ENCODE measurements at regions of chr11 and their contacts with region 1.

Region 1: DNA sequence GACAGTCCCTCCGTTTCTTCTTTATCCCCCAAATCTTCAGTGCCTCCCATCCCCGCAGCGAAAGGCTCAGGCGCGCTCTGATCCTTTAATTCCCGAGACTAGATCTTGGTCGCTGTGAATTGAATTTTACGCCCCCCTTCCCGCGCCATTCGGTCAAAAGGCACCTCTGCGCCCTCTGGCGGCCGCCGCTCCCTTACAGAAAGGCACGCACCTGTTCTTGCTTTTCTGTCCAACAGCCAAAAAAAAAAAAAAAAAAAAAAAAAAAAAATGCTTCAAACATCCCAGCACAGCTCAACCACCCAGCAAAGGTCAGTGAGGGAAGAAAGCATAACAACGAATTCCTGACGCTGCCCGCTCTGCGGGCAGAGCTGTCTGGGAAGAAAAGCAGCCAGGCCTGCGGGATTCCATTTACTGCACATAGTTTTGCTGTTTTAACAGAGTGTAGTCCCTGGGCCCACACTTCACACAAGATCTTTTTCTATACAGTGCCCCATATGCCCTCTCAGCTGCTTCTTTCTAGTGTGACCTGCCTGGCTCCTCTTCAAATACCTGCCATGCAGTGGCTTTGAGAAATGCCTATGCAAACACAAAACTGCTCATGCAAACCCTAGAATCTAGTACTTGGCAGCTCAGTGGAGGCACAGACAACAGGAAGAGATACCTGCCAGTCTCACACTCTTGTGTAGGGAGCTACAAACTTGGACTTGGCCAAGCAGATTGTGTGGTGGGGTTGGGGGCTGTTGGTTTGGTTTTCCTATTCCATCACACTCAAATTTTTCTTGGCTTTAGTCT is 1.3 kb upstream of the ESAM start:
- DNase-seq: peak; percentile 89

Region 2: DNA sequence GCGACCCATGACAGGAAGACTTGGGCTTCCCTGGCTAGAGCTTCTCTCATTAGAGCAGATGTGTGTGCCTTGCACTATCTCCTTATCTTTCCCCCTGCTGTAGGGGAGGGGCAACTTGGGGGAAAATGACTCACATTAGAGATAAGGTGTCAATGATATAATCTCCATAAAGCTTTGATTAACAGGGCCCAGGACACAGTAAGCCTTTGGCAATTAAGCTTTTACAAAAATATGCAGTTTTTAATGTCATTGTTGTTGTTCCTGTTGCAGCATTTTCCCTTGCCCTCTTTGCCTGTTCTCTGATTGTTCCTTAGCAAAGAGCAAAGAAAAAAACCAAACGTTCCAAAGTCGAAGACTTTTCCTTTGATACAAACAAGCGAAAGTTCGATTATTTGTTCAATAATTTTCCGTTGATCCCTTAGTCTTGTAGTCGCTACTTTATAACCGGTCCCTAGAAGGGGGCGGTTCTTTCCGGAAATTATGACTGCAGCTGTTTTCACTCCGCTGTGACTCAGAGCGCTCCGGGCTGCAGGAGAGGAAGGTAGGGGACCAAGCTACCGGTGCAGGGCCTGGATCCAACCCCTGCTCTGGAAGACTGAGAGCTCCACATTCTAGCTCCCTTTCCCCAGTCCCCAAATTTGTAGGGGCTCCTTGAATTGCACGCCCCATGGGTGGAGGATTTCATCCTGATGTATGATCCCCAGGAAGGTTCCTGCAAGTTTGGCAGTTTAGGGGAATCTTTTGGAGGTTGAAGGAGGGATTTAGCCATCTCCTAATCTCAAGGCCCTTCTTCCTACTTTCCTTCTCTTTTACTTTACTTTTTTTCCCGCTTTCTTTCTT is 648.2 kb before region 1 on chr11 and contains the start of gene VWA5A:
- intact Hi-C with region 1: no loop called
- DNase-seq: peak; percentile 87
- total RNA-seq, gene VWA5A: 4.3 TPM

Region 3: DNA sequence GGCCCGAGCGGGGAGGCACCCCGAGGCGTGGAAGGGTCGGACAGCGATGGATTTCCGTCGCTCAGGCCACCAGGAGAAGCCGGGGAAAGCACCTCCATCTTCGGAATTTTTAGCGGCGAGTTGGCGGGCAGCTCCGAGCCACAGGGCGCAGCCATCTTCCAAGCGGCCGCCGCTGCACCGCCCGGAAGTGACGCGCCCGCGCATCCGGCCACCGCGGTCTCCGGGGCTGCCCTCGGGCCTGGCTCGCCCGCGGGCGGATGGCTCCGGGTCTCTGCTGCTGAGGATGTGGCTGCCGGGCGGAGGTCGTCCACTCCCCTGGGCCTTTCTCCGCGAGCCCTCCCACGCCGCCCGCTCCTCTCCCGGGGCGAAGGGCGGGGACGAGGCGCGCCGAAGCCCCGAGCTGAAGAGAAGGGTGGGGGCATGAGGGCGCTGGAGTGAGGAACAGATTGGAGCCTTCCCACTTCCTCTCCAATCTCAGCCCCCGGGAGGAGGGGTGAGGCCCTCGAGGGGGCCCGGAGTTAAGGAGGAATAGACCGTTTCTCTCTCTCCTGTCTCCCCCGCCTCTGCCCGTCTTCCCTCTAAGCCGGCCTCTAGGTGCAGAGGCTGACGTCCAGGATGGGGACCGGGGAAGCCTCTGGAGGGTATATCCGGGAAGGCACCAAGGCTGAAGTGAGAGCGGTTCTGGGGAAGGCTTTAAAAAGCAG is 37.0 kb after region 1 on chr11 and contains the start of gene MSANTD2:
- intact Hi-C with region 1: loop called (anchors 5 kb)
- DNase-seq: peak; percentile 93
- total RNA-seq, gene MSANTD2: 5.3 TPM

Region 4: DNA sequence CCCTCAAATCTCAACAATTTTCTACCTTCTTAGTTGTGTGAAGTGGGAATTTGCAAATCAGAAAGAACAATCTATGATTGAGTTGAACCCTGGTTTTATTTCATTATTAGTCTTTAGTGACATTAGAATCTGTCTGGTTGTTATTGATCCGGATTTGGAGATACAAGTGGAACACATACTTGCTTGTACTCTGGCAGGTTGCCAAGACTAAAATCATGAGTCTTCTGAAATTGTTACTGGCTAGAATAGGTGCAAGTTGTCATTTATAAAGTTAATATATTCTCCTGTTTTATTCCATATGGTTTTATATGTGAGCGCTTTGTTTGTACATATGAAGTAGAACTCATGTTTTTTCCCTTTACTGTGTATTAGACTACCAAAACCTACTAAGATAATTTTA is 213.6 kb after region 1 on chr11:
- intact Hi-C with region 1: no loop called
- DNase-seq: no peak

Measured in cardiac septum (tissue), 1 donor.